ENCODE measurements at regions of chr7 and their contacts with region 1.

Region 1: DNA sequence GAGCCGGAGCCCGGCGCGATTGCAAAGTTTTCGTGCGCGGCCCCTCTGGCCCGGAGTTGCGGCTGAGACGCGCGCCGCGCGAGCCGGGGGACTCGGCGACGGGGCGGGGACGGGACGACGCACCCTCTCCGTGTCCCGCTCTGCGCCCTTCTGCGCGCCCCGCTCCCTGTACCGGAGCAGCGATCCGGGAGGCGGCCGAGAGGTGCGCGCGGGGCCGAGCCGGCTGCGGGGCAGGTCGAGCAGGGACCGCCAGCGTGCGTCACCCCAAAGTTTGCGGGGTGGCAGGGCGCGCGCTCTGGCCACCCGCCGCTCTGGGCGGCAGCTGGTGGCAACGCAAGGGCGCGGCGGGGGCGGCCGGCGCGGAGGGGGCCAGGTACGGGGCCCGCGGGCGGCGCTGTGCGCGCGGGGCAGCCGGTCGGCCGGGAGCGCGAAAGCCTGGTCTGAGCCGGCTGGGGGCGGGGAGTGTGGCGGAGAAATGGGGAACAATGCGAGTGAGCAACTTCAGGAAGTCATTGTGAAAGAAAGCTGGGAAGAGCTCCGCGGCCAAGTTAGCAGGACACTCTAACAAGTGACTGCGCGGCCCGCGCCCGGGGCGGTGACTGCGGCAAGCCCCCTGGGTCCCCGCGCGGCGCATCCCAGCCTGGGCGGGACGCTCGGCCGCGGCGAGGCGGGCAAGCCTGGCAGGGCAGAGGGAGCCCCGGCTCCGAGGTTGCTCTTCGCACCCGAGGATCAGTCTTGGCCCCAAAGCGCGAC is at the start of gene IKZF1:
- DNase-seq: peak; percentile 77
- ATAC-seq: peak; percentile 25
- H3K4me3 Mint-ChIP-seq: peak within 1 kb of the TSS; percentile 97
- H3K27ac Mint-ChIP-seq: peak within 1 kb of the TSS; percentile 97
- H3K4me1 Mint-ChIP-seq: peaks cover 35% of the 10 kb centered on the region
- H3K27me3 Mint-ChIP-seq: no peaks in the 10 kb centered on the region
- total RNA-seq, gene IKZF1: 383 to 410 TPM

Region 2: GRCh38 chr7:50229964-50230363 is 74.4 kb before region 1 on chr7:
- POLR2A ChIA-PET with region 1: interaction called, 17 read pairs
- DNase-seq: no peak
- ATAC-seq: no peak
- H3K4me3 Mint-ChIP-seq: no peak overlapping the region
- H3K27ac Mint-ChIP-seq: no peak overlapping the region
- H3K4me1 Mint-ChIP-seq: peaks cover 39% of the 10 kb centered on the region
- H3K27me3 Mint-ChIP-seq: no peaks in the 10 kb centered on the region

Region 3: DNA sequence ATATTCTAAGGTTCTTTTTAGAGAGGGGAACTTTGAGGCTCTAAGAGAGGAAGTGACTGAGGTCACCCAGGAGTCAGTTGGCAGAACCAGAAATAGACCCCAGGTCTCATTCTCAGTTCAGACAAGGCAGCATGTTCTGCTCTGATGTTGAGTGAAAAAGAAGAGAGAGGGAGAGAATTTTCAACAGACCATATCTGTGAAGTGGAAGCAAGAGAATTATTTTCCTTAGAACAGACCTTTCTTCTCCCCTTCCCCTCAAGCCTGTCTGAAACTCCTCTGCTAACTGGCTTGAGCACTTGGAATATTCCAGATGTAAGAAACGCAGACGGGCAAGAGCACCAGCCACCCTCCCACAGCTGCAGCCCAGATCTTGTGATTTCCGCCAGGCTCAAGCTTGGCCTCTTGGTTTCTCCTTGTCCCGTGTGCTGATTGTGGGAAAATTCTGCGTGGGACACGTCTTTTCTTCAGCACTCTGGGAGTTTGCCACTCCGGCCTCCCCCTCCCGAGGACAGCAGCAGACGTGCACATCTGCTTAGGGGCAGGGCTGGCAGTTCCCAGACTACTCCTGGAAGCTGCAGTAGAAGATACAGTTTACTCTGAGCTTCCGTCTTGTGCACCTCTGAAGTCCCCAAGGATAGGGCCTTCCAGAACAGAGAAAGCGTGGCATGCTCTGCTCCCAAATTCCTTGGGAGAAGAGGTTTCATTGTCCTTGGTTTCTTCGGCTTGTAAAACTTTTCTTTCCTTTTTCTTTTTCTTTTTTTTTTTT is 22.5 kb before region 1 on chr7:
- POLR2A ChIA-PET with region 1: interaction called, 26 read pairs
- DNase-seq: no peak
- ATAC-seq: peak; percentile 83
- H3K4me3 Mint-ChIP-seq: peak overlapping the region; percentile 82
- H3K27ac Mint-ChIP-seq: peak overlapping the region; percentile 86
- H3K4me1 Mint-ChIP-seq: peaks cover 41% of the 10 kb centered on the region
- H3K27me3 Mint-ChIP-seq: no peaks in the 10 kb centered on the region

Region 4: DNA sequence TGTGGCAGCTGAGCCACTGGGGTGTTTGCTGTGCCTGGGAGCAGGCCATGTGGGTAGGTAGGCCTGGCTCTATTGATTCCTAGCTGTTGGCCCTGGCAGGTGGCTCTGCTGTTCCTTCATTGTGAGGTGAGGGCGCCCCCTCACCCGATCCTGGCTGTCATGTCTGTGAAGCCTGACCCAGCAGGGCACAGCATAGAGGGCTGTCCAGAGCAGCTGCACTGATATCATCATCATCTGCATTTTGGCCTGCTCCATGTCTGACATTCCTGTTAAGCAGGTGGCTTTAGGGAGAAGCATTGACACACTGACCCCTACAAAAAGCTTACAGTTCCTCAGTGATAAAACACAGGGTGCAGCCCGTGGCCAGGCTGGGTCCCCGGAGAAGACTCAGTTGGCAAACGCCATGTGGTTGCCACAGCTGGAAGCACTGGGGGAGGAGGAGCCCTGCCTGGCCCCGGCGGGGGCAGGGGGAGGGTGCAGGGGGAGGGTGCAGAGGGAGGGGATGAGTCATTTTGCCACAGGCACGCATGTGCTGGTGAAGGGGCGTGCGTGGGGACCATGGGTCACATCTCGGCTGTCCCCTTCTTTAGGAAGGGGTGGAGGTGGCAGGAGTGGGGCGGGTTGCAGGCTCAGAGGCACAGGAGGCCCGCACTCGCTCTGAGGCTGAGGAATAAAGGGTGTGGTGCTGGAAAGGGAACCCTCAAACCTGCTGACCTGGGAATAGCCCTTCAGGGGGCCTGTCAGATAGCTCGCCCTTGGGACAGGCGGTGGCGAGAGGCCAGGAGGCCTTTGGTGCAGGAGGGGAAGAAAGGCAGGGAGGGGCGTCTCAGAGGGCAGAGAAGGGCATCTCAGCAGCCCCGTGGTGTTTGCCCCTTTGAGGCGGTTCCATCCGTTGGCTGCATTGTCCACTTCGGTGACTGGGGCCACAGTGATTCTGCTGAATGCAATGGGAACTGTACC is 31.7 kb after region 1 on chr7:
- POLR2A ChIA-PET with region 1: interaction called, 489 read pairs
- DNase-seq: peak; percentile 78
- ATAC-seq: peak; percentile 27
- H3K4me3 Mint-ChIP-seq: no peak overlapping the region
- H3K27ac Mint-ChIP-seq: no peak overlapping the region
- H3K4me1 Mint-ChIP-seq: peaks cover 61% of the 10 kb centered on the region
- H3K27me3 Mint-ChIP-seq: no peaks in the 10 kb centered on the region

Region 5: GRCh38 chr7:50376056-50376823 is 71.9 kb after region 1 on chr7:
- POLR2A ChIA-PET with region 1: no interaction called
- DNase-seq: no peak
- ATAC-seq: no peak
- H3K4me3 Mint-ChIP-seq: no peak overlapping the region
- H3K27ac Mint-ChIP-seq: peak overlapping the region; percentile 10
- H3K4me1 Mint-ChIP-seq: peaks cover 49% of the 10 kb centered on the region
- H3K27me3 Mint-ChIP-seq: no peaks in the 10 kb centered on the region

Measured in activated naive CD8-positive, alpha-beta T cell treated with anti-CD3 and anti-CD28 coated beads, Interleukin-2, amount 10 ng/mL, durations not matched to agents 7 days and 5 days (primary cell).